Psoas muscle (tissue), 8 donors: ENCODE measurements at regions of chr6 and their contacts with region 1.

Region 1: DNA sequence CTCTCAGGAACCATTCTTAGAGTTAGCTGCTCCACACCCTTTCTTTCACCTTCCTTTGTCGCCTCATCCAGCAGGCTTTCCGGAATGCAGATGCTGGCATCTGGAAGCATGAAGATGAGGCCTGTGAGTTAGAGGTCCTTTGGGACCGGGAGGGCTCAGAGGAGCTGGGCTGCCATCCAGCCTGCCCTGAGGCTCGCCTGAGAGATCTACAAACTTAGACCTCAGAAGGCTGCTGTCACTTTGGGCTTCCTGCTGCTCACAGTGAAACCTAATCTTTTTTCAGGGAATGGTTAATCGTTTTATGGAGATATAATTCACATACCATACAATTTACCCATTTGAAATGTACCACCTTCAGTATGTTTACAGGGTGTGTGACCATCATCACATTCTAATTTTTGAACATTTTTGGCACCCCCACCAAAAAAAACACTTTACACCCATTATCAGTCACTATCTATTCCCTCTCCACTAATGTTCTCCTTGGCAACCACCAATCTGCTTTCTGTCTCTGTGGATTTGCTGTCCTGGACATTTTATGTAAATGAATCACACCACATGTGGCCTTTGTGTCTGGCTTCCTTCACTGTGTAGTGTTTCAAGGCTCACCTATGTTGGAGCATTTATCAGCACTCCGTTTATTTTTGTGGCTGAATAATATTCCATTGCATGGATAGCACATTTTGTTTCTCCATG is 20.0 kb upstream of the MPC1 start:
- DNase-seq: no peak
- ATAC-seq: no peak
- H3K4me3 ChIP-seq: no peak overlapping the region
- H3K27ac ChIP-seq: no peak overlapping the region
- H3K4me1 ChIP-seq: no peaks in the 10 kb centered on the region
- H3K27me3 ChIP-seq: no peaks in the 10 kb centered on the region
- CTCF ChIP-seq: no peak

Region 2: DNA sequence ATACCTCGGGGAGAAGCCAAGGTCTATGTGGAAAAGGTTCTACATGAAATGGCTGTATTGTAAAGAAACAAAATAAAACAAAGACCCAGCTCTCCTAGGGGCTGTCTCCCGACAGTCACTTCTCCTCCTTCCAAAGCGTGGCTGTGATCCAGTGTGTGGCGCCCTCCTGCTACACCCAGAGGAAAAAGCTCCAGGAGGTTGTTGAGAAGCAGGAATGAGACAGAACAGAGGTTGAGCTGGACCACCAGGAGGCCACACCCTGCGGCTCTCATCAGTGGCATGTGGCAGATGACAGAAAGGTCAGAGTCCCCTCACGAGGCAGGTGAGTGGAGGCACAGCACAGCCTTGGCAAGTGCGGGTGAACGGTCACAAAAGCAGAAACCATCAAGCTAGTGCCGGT is 471.1 kb before region 1 on chr6:
- intact Hi-C with region 1: no loop called
- DNase-seq: no peak
- ATAC-seq: no peak
- H3K4me3 ChIP-seq: no peak overlapping the region
- H3K27ac ChIP-seq: no peak overlapping the region
- H3K4me1 ChIP-seq: no peaks in the 10 kb centered on the region
- H3K27me3 ChIP-seq: no peaks in the 10 kb centered on the region
- CTCF ChIP-seq: no peak

Region 3: DNA sequence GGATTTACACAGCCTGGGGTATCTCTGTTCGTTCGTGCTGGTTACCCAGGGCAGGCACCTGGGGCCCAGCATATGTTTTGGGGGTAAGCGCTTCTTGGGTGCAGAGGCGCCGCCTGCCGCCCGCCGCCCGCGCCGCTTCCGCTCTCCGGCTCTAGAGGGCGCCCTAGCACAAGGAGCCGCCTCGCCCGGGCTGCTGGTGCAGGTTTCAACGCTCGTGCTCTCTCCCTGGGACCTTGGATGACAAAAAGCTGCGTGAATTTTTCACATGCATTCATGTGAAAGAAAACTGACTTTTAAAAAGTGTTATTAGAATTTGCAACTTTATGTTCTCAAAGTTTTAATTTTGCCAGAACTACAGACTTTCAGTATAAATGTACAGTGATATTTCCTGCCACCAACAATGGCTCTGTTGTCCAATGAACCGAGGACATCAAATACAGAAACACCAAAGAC is 127.0 kb before region 1 on chr6:
- intact Hi-C with region 1: loop called (anchors 1 to 2 kb)
- DNase-seq: peak; percentile 56 to 79
- ATAC-seq: peak; percentile 87 to 97 (median 89)
- H3K4me3 ChIP-seq: no peak overlapping the region
- H3K27ac ChIP-seq: no peak overlapping the region
- H3K4me1 ChIP-seq: no peaks in the 10 kb centered on the region
- H3K27me3 ChIP-seq: peaks cover 0 to 5% (median 0%) of the 10 kb centered on the region in 3 donors
- CTCF ChIP-seq: peak; percentile 97

Region 4: GRCh38 chr6:166313255-166314070 is 89.3 kb before region 1 on chr6:
- intact Hi-C with region 1: loop called (anchors 2 to 5 kb)
- DNase-seq: no peak
- ATAC-seq: peak in 3 of 4 donors; percentile 57 to 82 (median 77)
- H3K4me3 ChIP-seq: no peak overlapping the region
- H3K27ac ChIP-seq: no peak overlapping the region
- H3K4me1 ChIP-seq: no peaks in the 10 kb centered on the region
- H3K27me3 ChIP-seq: peaks cover 0 to 11% (median 4%) of the 10 kb centered on the region in 3 donors
- CTCF ChIP-seq: peak; percentile 55